Caco-2 (cell line): ENCODE measurements at regions of chr2 and their contacts with region 1.

Region 1: GRCh38 chr2:165401285-165401852 is 68.1 kb upstream of the CSRNP3 start:
- DNase-seq: peak in 1 of 2 experiments; percentile 61
- H3K4me3 ChIP-seq: no peak overlapping the region
- H3K4me3 Mint-ChIP-seq: no peak overlapping the region
- H3K27ac Mint-ChIP-seq: no peak overlapping the region
- H3K4me1 ChIP-seq: 0 out of 2 replicates have a peak, but pooled peaks cover 4% of the 10 kb centered on the region
- H3K4me1 Mint-ChIP-seq: peaks cover 1% of the 10 kb centered on the region
- H3K27me3 ChIP-seq: no peaks in the 10 kb centered on the region
- H3K27me3 Mint-ChIP-seq: no peaks in the 10 kb centered on the region
- CTCF ChIP-seq: peak; percentile 70 to 78

Region 2: GRCh38 chr2:165434865-165435496 is 33.6 kb after region 1 on chr2:
- CTCF ChIA-PET with region 1: no interaction called
- POLR2A ChIA-PET with region 1: no interaction called
- intact Hi-C with region 1: loop called (anchors 1 kb)
- DNase-seq: peak in 1 of 2 experiments; percentile 57
- H3K4me3 ChIP-seq: no peak overlapping the region
- H3K4me3 Mint-ChIP-seq: peak overlapping the region; percentile 42
- H3K27ac Mint-ChIP-seq: peak overlapping the region; percentile 84
- H3K4me1 ChIP-seq: peaks cover 25% of the 10 kb centered on the region
- H3K4me1 Mint-ChIP-seq: peaks cover 7% of the 10 kb centered on the region
- H3K27me3 ChIP-seq: no peaks in the 10 kb centered on the region
- H3K27me3 Mint-ChIP-seq: no peaks in the 10 kb centered on the region
- CTCF ChIP-seq: no peak

Region 3: DNA sequence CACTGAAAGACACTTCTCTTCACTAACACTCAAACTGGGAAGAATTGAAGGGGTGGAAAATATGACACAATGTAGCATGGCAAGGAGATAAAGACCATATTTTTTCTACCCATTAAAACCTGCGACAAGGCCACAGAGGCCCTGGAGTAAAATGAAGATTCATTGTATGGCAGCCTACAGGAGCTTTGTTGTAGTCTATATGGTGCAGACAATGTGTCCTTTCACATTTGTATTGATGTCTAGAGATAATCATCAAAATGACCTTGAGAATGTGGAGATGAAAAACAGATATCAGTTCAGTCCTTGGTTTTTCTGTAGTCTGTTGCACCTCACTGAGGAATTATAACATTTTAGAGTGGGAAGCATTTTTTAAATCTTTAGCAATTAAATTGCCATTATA is 148.2 kb after region 1 on chr2:
- CTCF ChIA-PET with region 1: no interaction called
- POLR2A ChIA-PET with region 1: no interaction called
- intact Hi-C with region 1: loop called (anchors 1 kb)
- DNase-seq: no peak
- H3K4me3 ChIP-seq: no peak overlapping the region
- H3K4me3 Mint-ChIP-seq: no peak overlapping the region
- H3K27ac Mint-ChIP-seq: no peak overlapping the region
- H3K4me1 ChIP-seq: no peaks in the 10 kb centered on the region
- H3K4me1 Mint-ChIP-seq: no peaks in the 10 kb centered on the region
- H3K27me3 ChIP-seq: no peaks in the 10 kb centered on the region
- H3K27me3 Mint-ChIP-seq: no peaks in the 10 kb centered on the region
- CTCF ChIP-seq: no peak

Region 4: DNA sequence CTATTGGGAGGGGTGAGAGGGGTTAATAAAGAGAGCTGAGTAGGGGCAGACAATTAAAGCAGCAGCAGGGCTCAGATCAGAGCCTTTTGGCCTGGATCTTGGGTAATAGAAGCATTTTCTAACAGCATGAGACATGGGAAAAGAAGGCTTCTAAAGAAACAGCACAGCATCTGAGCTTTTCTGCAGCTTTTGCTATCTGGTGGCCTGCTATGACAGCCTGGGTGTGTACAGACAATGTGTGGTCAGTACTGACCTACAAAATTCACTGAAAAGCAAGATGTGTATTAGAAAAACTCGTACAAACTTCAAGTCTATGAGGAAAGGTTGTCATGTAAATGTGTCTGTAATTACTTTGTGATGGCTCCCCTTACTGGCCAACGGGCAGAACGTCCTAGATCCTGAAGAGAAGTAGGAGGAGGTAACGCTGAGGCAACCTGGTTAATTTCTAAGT is 297.1 kb after region 1 on chr2:
- CTCF ChIA-PET with region 1: no interaction called
- POLR2A ChIA-PET with region 1: no interaction called
- intact Hi-C with region 1: loop called (anchors 1 kb)
- DNase-seq: peak; percentile 48 to 49
- H3K4me3 ChIP-seq: no peak overlapping the region
- H3K4me3 Mint-ChIP-seq: no peak overlapping the region
- H3K27ac Mint-ChIP-seq: no peak overlapping the region
- H3K4me1 ChIP-seq: no peaks in the 10 kb centered on the region
- H3K4me1 Mint-ChIP-seq: no peaks in the 10 kb centered on the region
- H3K27me3 ChIP-seq: no peaks in the 10 kb centered on the region
- H3K27me3 Mint-ChIP-seq: peaks cover 5% of the 10 kb centered on the region
- CTCF ChIP-seq: peak; percentile 37 to 73

Region 5: DNA sequence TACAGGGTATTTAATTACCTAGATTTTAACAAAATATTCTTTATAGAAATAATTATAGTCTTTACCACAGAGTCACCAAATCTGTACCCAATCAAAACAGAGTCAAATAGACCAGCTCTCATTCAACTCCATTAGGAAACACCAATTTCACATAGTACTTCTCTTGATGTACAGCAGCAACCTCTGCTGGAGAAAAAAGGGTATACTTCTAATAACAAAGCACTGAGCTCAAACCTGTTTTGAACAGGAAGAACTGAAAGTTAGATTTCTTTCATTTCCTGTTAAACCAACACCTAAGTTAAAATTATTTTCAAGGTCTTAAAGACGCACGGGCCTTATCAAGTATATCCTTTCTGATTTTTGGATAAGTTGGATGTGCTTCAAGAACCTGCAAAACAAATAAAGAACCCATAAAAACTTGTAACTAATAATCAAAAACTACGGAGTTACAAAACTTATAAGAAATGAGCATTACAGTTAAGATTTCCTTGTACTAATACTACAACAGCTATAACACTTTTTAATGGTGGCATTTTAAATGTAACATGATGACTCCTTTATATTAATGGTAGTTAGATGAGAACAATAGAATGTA is 473.2 kb after region 1 on chr2:
- CTCF ChIA-PET with region 1: interaction called, 5 read pairs
- POLR2A ChIA-PET with region 1: no interaction called
- intact Hi-C with region 1: loop called (anchors 1 kb)
- DNase-seq: peak in 1 of 2 experiments; percentile 42
- H3K4me3 ChIP-seq: no peak overlapping the region
- H3K4me3 Mint-ChIP-seq: no peak overlapping the region
- H3K27ac Mint-ChIP-seq: no peak overlapping the region
- H3K4me1 ChIP-seq: peaks cover 8% of the 10 kb centered on the region
- H3K4me1 Mint-ChIP-seq: peaks cover 12% of the 10 kb centered on the region
- H3K27me3 ChIP-seq: no peaks in the 10 kb centered on the region
- H3K27me3 Mint-ChIP-seq: no peaks in the 10 kb centered on the region
- CTCF ChIP-seq: peak; percentile 48 to 60